ENCODE measurements at regions of chr15 and their contacts with region 1.

Region 1: DNA sequence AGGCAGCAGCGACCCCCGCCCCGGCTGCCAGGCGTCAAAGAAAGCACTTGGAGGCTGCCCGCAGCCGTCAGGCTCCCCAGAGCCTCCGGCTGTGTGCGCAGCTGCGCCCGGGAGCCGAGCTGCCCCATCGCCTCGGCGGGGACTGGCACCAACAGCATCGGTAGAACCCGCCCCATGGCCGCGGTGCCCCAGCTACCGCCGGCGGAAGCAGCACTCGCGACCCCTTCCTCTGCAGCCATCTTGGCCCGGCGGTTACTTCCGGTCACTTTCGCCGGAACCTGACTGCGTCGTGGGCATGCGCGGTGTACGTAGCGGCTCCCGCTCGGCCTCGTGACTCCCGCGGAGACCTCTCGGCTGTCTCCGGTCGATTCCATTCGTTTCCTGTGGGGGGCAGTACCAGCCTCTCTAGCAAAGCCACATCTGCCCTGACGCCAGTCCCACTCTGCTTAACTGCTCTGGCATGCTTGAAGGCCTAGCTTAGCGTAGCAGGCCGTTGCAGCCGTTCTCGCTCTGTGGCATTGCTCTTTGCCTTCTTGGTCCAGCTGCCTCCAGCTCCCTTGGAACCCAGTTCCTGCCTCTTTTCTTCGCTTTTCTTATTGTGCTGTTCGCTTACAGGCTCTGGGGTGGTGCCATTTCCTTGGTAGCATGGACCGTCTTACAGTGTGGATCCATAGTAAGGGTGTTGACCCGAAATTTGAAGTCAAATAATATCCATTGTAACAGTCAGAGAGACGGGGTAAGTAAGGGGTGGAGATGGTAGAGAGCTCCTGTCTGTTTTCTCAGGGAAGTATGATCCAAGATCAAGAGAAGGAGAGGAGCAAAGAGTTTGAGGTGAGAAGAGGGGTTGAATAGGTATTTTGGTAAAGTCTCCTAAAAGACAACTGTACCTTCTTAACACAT is at the start of gene SPG11:
- DNase-seq: peak; percentile 94
- H3K4me3 ChIP-seq: peak within 1 kb of the TSS; percentile 90 to 95
- H3K27ac ChIP-seq: peak within 1 kb of the TSS; percentile 84 to 93
- H3K4me1 ChIP-seq: peaks cover 7% of the 10 kb centered on the region in 2 experiments; a peak in 3 of 4 replicates
- H3K27me3 ChIP-seq: no peaks in the 10 kb centered on the region
- CTCF ChIP-seq: peak; percentile 84
- EP300 ChIP-seq: peak in 1 of 2 experiments; percentile 23; a peak in 1 of 4 replicates
- RAD21 ChIP-seq: peak; percentile 88
- polyA plus RNA-seq, gene SPG11: 36.3 and 48.7 TPM in 2 replicates

Region 2: DNA sequence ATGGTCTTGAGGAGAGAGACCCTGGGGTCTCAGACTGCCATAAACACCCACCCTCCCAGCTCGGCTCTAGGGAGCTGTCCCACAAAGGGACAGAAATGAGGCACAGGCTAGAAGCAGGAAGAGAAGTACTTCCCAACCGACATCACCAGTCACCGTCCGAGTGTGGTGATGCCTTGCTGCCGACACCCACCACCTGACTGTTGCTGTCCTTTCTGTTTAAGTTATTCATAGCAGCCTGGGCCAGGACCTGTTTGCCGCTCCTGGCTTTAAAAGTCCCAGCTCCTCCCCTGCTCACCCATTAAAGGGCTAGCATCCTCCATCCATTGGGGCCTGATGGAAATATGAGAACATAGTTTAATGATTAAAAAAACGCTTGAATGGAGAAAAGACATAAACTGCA is 13.0 kb after region 1 on chr15:
- CTCF ChIA-PET with region 1: interaction called, 16 read pairs
- POLR2A ChIA-PET with region 1: interaction called, 5 read pairs
- DNase-seq: no peak
- H3K4me3 ChIP-seq: no peak overlapping the region
- H3K27ac ChIP-seq: no peak overlapping the region
- H3K4me1 ChIP-seq: no peaks in the 10 kb centered on the region
- H3K27me3 ChIP-seq: peaks cover 3% of the 10 kb centered on the region; the same call in 1 of the 2 replicates
- CTCF ChIP-seq: no peak
- EP300 ChIP-seq: no peak
- RAD21 ChIP-seq: no peak

Region 3: GRCh38 chr15:44682211-44682610 is 18.6 kb after region 1 on chr15:
- CTCF ChIA-PET with region 1: interaction called, 15 read pairs
- POLR2A ChIA-PET with region 1: interaction called, 5 read pairs
- DNase-seq: no peak
- H3K4me3 ChIP-seq: no peak overlapping the region
- H3K27ac ChIP-seq: no peak overlapping the region
- H3K4me1 ChIP-seq: no peaks in the 10 kb centered on the region
- H3K27me3 ChIP-seq: peaks cover 3% of the 10 kb centered on the region; the same call in 1 of the 2 replicates
- CTCF ChIP-seq: no peak
- EP300 ChIP-seq: no peak
- RAD21 ChIP-seq: no peak

Region 4: DNA sequence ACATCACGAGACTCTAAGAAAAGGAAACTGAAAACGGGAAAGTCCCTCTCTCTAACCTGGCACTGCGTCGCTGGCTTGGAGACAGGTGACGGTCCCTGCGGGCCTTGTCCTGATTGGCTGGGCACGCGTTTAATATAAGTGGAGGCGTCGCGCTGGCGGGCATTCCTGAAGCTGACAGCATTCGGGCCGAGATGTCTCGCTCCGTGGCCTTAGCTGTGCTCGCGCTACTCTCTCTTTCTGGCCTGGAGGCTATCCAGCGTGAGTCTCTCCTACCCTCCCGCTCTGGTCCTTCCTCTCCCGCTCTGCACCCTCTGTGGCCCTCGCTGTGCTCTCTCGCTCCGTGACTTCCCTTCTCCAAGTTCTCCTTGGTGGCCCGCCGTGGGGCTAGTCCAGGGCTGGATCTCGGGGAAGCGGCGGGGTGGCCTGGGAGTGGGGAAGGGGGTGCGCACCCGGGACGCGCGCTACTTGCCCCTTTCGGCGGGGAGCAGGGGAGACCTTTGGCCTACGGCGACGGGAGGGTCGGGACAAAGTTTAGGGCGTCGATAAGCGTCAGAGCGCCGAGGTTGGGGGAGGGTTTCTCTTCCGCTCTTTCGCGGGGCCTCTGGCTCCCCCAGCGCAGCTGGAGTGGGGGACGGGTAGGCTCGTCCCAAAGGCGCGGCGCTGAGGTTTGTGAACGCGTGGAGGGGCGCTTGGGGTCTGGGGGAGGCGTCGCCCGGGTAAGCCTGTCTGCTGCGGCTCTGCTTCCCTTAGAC is 47.9 kb after region 1 on chr15 and contains the start of gene B2M:
- CTCF ChIA-PET with region 1: interaction called, 27 read pairs
- POLR2A ChIA-PET with region 1: interaction called, 16 read pairs
- DNase-seq: peak; percentile 93
- H3K4me3 ChIP-seq: peak within 1 kb of the TSS; percentile 74 to 99
- H3K27ac ChIP-seq: peak within 1 kb of the TSS; percentile 88 to 89
- H3K4me1 ChIP-seq: no peaks in the 10 kb centered on the region; a peak in 1 of 4 replicates
- H3K27me3 ChIP-seq: no peaks in the 10 kb centered on the region
- CTCF ChIP-seq: no peak
- EP300 ChIP-seq: no peak
- RAD21 ChIP-seq: no peak
- polyA plus RNA-seq, gene B2M: 1,193 and 2,153 TPM in 2 replicates

Region 5: DNA sequence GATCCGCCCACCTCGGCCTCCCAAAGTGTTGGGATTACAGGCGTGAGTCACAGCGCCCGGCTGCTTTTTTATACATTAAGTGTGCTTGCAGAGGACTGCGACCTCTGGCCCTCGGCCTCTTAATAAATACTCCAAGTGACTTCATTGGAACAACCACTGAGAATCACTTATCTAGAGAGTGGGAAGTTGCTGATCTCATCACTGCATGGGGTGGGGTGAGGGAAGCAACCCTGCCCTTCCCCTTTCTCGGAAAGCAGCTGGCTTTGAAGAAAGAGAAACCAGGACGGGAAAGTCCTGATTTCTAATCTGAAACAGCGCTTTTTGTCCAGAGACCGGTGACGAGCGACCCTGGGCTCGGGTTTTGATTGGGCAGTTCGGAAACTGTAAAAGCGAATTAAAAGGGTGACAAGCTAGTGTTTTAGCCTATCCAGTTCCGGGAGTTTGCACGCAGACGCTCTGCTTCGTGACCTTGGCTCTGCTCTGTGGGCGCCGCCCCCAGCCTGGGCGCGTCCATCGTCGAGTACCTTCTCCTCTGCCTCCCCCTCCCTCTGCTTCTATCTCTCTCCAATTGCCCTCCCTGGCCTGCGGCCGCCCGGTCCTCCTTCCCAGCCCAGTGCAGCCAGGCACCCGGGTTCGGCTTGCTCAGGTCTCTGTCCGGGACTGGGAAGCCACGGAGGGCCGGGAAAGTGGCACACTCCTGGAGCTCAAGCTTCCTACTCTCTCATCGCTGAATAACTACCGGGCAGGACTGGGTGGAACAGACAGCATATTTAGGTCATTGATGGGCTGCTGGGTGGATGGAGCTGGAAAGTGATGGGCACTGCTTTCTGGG is 65.1 kb after region 1 on chr15:
- CTCF ChIA-PET with region 1: interaction called, 66 read pairs
- POLR2A ChIA-PET with region 1: interaction called, 22 read pairs
- DNase-seq: peak; percentile 87
- H3K4me3 ChIP-seq: peak overlapping the region; percentile 73 to 94
- H3K27ac ChIP-seq: peak overlapping the region; percentile 97
- H3K4me1 ChIP-seq: peaks cover 6 to 17% of the 10 kb centered on the region in 2 experiments; a peak in 3 of 4 replicates
- H3K27me3 ChIP-seq: no peaks in the 10 kb centered on the region
- CTCF ChIP-seq: no peak
- EP300 ChIP-seq: peak; percentile 54 to 66; a peak in 3 of 4 replicates
- RAD21 ChIP-seq: peak; percentile 14; the same call in 1 of the 2 replicates

Region 6: GRCh38 chr15:44836094-44836493 is 172.4 kb after region 1 on chr15:
- CTCF ChIA-PET with region 1: no interaction called
- POLR2A ChIA-PET with region 1: no interaction called
- DNase-seq: no peak
- H3K4me3 ChIP-seq: no peak overlapping the region
- H3K27ac ChIP-seq: no peak overlapping the region
- H3K4me1 ChIP-seq: no peaks in the 10 kb centered on the region; a peak in 1 of 4 replicates
- H3K27me3 ChIP-seq: no peaks in the 10 kb centered on the region
- CTCF ChIP-seq: no peak
- EP300 ChIP-seq: no peak
- RAD21 ChIP-seq: no peak

Region 7: DNA sequence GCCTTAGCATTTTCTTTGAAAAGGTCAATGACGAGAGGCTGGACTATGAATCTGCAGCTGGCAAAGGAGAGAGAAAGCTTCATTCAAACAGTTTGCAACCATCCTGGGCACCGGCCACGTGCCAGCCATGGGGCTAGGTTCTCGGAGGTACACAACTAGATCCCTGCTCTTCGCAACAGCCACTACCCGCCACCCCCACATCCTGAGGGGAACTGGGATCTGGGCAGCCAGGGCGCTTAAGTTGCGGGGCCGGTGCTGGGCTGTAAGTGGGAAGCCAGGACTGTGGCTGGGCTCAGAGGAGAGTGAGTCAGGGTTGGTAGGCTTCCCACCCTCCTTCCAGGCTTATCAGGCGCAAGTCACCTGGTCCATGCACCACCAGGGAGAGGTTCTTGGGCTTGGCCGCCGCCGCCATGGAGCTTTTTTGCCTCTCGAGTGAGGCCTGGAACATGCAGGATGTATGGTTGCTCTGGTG is 197.8 kb after region 1 on chr15:
- CTCF ChIA-PET with region 1: no interaction called
- POLR2A ChIA-PET with region 1: no interaction called
- DNase-seq: no peak
- H3K4me3 ChIP-seq: no peak overlapping the region
- H3K27ac ChIP-seq: no peak overlapping the region
- H3K4me1 ChIP-seq: no peaks in the 10 kb centered on the region
- H3K27me3 ChIP-seq: no peaks in the 10 kb centered on the region
- CTCF ChIP-seq: no peak
- EP300 ChIP-seq: no peak
- RAD21 ChIP-seq: no peak

Measured in SK-N-SH (cell line).